Right lobe of liver (tissue), 6 donors: ENCODE measurements at regions of chr9 and their contacts with region 1.

Region 1: GRCh38 chr9:34376596-34377403 is at the start of gene MYORG:
- DNase-seq: peak; percentile 97 to 99 (median 99)
- ATAC-seq: peak; percentile 75 to 87 (median 76)
- H3K4me3 ChIP-seq: peak within 1 kb of the TSS; percentile 80 to 83 (median 80)
- H3K27ac ChIP-seq: peak within 1 kb of the TSS; percentile 60 to 70 (median 64)
- H3K4me1 ChIP-seq: peaks cover 0 to 33% (median 7%) of the 10 kb centered on the region in 4 donors
- H3K27me3 ChIP-seq: no peaks in the 10 kb centered on the region
- CTCF ChIP-seq: no peak
- POLR2A ChIP-seq: peak; percentile 93
- total RNA-seq, gene MYORG: 27.1 to 73.6 (median 36.0) TPM

Region 2: DNA sequence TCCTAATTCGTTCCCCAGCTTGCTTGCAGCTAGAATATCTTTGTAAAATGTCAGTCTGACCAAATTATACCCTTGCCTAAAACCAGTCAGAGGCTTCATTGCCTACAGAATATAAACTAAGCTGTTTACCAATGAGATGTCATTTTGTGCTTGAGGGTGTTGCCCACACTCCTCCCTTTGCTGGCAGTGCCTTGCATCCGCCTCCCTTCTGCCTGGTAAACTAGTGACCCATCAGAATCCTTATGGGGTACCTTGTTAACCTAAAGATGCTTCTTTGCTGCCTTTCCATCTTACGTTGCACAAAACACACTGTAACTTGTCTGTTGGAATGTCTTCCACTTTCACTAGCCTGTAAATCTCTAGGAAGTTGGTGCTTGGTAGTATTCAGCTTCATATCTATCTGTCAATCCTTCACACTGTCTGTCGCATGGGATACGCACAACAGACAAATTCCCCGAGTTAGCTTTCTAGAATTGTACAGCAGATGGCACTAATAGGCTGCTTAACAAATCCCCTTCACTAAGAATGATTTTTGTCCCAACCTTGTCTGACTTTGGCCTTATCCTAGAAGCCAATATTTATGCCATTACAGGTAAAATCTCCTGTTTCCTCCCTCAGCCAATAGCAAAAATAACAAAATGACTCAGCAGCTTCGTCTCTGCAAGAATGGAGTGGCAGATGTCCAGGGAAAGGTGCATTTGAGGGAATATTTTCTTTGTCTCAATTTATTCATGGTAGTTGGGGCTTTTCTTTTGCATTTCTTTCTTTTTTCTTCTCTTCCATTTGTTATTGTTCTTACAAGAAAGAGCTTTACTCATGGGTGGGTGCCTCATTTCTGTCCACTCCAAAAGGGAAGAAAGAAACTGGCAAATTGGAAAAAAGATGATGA is 44.5 kb before region 1 on chr9:
- intact Hi-C with region 1: loop called (anchors 5 kb)
- DNase-seq: no peak
- ATAC-seq: peak; percentile 38 to 49 (median 42)
- H3K4me3 ChIP-seq: no peak overlapping the region
- H3K27ac ChIP-seq: no peak overlapping the region
- H3K4me1 ChIP-seq: peaks cover 0 to 26% (median 4%) of the 10 kb centered on the region in 4 donors
- H3K27me3 ChIP-seq: no peaks in the 10 kb centered on the region
- CTCF ChIP-seq: peak; percentile 65 to 82 (median 69)
- POLR2A ChIP-seq: no peak

Region 3: DNA sequence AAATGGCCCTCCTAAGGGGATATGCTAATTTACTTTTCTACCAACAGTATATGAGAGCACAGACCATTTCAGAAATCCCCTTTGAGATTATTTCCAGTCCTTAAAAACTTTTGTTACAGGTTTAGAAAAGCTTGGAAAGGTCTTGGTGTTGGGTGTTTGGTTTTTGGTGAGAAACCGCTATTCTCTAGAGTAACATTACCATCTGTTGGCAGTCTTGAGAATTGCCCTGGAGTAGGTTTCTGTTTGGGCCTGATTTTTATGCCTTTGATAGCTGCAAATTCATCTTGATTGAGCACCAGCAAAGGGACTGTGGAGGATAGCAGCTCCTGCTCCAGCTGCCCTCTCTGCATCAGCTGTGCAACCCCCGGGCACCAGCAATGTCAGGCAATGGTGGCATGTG is 39.4 kb before region 1 on chr9:
- intact Hi-C with region 1: loop called (anchors 5 kb)
- DNase-seq: no peak
- ATAC-seq: no peak
- H3K4me3 ChIP-seq: no peak overlapping the region
- H3K27ac ChIP-seq: no peak overlapping the region
- H3K4me1 ChIP-seq: peaks cover 0 to 24% (median 6%) of the 10 kb centered on the region in 4 donors
- H3K27me3 ChIP-seq: no peaks in the 10 kb centered on the region
- CTCF ChIP-seq: peak in 1 of 4 donors; percentile 7
- POLR2A ChIP-seq: no peak